SK-N-SH (cell line): ENCODE measurements at regions of chr18 and their contacts with region 1.

Region 1: GRCh38 chr18:35240664-35241447 is at the start of gene ZNF397:
- DNase-seq: peak; percentile 94
- H3K4me3 ChIP-seq: peak within 1 kb of the TSS; percentile 65
- H3K27ac ChIP-seq: peak within 1 kb of the TSS; percentile 95 to 97
- H3K4me1 ChIP-seq: peaks cover 3 to 10% of the 10 kb centered on the region in 2 experiments; a peak in 3 of 4 replicates
- H3K27me3 ChIP-seq: no peaks in the 10 kb centered on the region
- CTCF ChIP-seq: no peak
- EP300 ChIP-seq: peak in 1 of 2 experiments; percentile 42; a peak in 1 of 4 replicates
- RAD21 ChIP-seq: peak; percentile 8; the same call in 1 of the 2 replicates
- polyA plus RNA-seq, gene ZNF397: 4.8 and 7.4 TPM in 2 replicates

Region 2: DNA sequence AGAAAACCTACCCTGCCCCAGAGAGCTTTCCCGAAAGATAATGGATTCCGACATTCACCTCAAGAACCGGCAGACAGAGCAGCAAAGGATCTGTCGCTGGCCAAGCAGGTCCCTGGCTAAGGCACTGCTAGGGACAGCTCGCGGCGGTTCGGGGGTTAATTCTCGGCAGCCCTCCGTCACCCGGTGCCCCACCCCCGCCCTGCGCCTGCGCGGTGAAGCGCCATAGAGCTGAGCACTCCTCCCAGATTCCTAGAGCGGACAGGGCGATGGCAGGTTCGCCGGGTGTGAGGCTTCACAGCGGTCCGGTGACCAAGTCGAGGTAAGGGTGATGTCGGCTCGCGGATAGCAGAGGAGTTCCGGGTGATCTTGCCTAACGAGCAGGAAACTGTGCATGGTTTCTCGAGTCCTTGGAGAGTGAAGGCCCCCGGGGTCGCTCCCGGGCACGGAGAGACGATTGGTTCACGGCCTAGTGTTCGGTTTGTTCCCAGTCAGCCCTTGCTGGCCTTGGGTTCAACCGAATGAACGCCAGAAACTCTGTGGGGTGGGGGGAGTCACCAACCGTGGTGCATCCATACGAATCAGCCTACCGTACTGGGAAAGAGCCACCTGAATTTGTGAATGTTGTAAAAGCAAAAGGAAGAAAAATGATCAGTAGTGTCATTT is 49.3 kb after region 1 on chr18 and contains the start of gene ZSCAN30:
- CTCF ChIA-PET with region 1: no interaction called
- POLR2A ChIA-PET with region 1: interaction called, 16 read pairs
- DNase-seq: peak; percentile 93
- H3K4me3 ChIP-seq: peak within 1 kb of the TSS; percentile 87 to 91
- H3K27ac ChIP-seq: peak within 1 kb of the TSS; percentile 61 to 78
- H3K4me1 ChIP-seq: peaks cover 0 to 6% of the 10 kb centered on the region in 2 experiments; a peak in 1 of 4 replicates
- H3K27me3 ChIP-seq: no peaks in the 10 kb centered on the region
- CTCF ChIP-seq: no peak
- EP300 ChIP-seq: peak in 1 of 2 experiments; percentile 4; a peak in 1 of 4 replicates
- RAD21 ChIP-seq: no peak
- polyA plus RNA-seq, gene ZSCAN30: 5.9 and 7.0 TPM in 2 replicates

Region 3: GRCh38 chr18:35635170-35635569 is 394.3 kb after region 1 on chr18:
- CTCF ChIA-PET with region 1: no interaction called
- POLR2A ChIA-PET with region 1: no interaction called
- DNase-seq: peak; percentile 37
- H3K4me3 ChIP-seq: no peak overlapping the region
- H3K27ac ChIP-seq: peak overlapping the region in 1 of 2 experiments; percentile 86; a peak in 3 of 4 replicates
- H3K4me1 ChIP-seq: peaks cover 0 to 16% of the 10 kb centered on the region in 2 experiments; a peak in 3 of 4 replicates
- H3K27me3 ChIP-seq: no peaks in the 10 kb centered on the region
- CTCF ChIP-seq: no peak
- EP300 ChIP-seq: peak; percentile 16 to 27; a peak in 1 of 4 replicates
- RAD21 ChIP-seq: no peak